ENCODE measurements at regions of chr3 and their contacts with region 1.

Region 1: DNA sequence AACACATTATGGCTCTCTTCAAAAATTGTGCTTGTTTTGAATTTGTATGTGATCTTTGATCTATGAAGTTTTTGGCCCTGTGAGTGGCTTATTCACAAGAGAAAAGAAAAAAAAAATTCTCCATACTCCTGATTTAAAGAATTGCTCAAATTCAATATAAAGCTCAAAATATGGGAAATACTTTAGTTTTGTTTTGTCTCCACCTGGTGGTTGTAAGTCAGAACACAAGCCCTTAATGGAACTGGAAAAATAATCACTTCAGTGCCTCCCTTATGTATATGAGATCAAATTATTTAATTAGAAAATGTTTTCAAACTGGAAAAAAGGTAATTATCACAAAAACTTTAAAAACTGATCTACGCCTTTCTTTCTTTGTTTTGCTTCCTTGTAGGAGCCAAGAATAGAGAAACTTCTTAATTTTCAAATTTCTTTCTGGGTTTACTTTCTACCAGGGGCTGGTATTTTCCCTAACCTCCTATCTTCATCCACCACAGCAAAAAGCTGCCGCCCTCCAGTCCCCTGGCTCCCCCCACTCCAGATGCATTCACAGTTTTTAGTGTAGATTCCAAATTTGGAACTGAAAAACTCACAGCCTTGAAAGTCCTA is 50.6 kb downstream of the SERP1 start:
- DNase-seq: no peak
- H3K4me3 ChIP-seq: no peak overlapping the region
- H3K27ac ChIP-seq: no peak overlapping the region
- H3K4me1 ChIP-seq: no peaks in the 10 kb centered on the region
- H3K27me3 ChIP-seq: no peaks in the 10 kb centered on the region
- CTCF ChIP-seq: peak; percentile 59 to 91 (median 84)
- POLR2A ChIP-seq: no peak

Region 2: DNA sequence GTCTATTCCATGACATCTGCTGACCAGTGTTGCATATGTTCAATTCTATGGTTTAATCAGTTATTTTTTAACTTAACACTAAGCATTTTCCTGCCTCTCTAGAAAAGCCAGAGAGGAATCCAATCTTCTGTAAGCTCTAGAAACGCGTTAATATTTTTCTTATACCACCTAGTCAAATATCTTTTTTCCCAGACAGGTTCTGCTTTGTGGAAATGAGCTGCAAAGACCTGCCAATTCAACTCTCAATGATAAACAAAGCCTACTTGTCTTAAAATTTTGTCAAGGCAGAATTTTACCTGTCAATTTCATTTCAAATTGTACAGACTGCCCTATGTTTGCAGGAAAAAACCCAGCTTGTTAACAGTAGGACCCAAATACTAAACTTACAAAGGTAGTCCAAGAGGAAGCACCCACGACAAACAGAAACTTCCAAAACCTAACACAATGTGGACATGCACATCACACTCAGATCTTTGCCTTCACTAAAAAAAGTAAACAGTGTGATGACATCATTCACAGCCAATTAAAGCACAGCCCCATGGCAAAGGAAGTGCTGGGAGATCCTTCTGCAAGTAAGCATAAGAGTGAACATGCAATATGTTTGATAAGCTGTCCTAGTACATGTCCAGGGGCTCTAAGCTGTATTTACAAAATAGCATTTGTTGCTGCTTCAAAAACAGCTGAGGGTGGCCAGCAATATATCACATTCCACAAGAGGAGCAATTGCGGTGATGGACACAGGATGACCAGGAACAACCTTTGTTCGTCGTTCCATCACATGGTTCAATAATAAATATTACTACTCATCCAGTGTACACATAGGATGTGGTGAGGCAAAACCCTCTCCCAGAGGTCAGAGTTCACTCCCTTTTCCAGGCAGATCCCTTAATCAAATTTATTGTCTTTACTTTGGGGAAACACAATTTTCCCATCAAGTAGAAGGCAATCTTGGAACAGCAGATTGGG is 227.0 kb before region 1 on chr3:
- intact Hi-C with region 1: no loop called
- DNase-seq: no peak
- H3K4me3 ChIP-seq: no peak overlapping the region
- H3K27ac ChIP-seq: no peak overlapping the region
- H3K4me1 ChIP-seq: no peaks in the 10 kb centered on the region
- H3K27me3 ChIP-seq: no peaks in the 10 kb centered on the region
- CTCF ChIP-seq: no peak
- POLR2A ChIP-seq: no peak

Region 3: GRCh38 chr3:150286390-150287147 is 209.1 kb before region 1 on chr3:
- intact Hi-C with region 1: loop called (anchors 10 kb)
- DNase-seq: no peak
- H3K4me3 ChIP-seq: no peak overlapping the region
- H3K27ac ChIP-seq: no peak overlapping the region
- H3K4me1 ChIP-seq: no peaks in the 10 kb centered on the region
- H3K27me3 ChIP-seq: no peaks in the 10 kb centered on the region
- CTCF ChIP-seq: peak; percentile 19 to 79 (median 52)
- POLR2A ChIP-seq: no peak

Region 4: GRCh38 chr3:150408221-150409102 is 87.2 kb before region 1 on chr3 and contains the start of gene TSC22D2:
- intact Hi-C with region 1: loop called (anchors 10 kb)
- DNase-seq: peak; percentile 78
- H3K4me3 ChIP-seq: peak within 1 kb of the TSS; percentile 68 to 97 (median 90)
- H3K27ac ChIP-seq: peak within 1 kb of the TSS; percentile 99 to 100 (median 100)
- H3K4me1 ChIP-seq: peaks cover 0 to 37% (median 0%) of the 10 kb centered on the region in 3 donors
- H3K27me3 ChIP-seq: no peaks in the 10 kb centered on the region
- CTCF ChIP-seq: peak in 5 of 6 experiments; percentile 7 to 32 (median 27)
- POLR2A ChIP-seq: peak in 3 of 4 donors; percentile 95 to 99 (median 96)
- total RNA-seq, gene TSC22D2: 8.5 to 20.0 (median 15.2) TPM